ENCODE measurements at regions of chr5 and their contacts with region 1.

Region 1: GRCh38 chr5:57499262-57500050 is 16.8 kb upstream of the ACTBL2 start:
- DNase-seq: peak; percentile 42
- H3K4me3 ChIP-seq: no peak overlapping the region
- CTCF ChIP-seq: peak; percentile 77

Region 2: DNA sequence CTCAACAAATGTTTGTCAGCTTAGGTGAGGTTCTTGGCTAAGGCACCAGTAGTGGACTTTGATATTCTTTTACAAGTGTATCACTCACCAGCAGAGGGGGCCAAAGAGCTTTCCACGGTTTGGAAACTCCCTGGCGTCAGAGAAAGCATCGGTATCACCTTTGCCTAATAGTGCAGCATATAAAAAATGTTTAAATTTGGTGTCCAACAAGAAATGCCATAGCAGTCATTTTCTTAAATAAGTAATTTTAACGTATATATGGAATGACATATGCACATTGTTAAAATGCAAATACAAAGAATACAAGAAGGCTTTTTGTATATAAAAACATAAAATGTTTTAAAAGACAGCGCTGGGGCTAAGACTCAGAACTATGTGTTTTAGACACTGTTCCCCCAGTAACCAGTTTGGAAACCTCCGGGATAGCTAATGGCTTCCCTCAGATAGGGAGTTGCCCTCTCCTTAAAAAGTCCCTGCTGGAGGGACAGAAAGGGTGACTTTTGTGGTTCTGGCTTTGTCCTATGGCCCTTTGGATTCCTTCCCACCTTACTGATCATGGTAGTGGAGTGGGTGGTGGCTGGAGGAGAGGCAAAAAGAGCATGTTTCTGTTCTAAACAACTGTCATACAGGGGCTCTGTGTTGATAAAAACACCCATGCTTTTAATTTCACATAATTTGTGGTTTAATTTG is 201.0 kb before region 1 on chr5:
- in situ Hi-C with region 1: loop called (anchors 25 kb)
- DNase-seq: peak; percentile 87
- H3K4me3 ChIP-seq: no peak overlapping the region
- CTCF ChIP-seq: peak; percentile 81

Region 3: DNA sequence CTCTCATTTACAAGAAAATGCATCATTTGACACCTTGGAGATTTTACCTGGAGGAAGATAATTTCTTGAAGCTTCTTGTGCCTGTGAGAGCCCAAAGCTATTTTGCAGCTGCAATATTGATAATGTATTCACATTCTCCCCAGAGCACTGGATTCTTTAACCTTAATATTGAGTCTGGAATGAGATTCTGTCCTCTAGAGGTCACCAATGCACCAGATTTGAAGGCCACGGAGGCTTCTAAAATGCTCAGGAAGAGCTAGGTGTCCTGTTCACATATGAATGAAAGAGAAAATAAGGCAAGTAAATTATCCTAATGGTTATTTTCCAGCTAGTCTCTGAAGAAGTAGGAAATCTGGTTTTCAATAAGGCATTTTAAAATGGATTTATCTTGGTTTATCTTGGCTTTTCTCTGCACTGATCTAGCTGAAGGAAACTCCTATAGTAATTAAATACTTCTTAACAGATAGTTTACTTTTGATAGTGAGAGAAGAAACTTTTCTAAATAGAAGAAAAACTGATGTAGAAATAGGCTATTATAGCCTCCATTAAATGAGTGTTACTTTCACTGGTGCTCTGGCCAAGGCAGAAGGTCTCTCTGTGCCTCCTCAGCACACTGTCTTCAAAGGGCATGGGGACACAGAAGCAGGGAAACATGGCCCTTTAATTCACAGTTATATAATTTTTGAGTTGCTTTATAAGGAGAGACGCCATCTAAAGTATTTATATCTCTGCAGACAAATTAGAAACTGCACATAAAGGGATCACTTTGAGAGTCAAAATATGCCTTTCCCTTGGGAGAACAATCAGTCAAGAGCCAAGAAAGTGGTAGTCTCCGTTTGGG is 280.1 kb after region 1 on chr5:
- in situ Hi-C with region 1: loop called (anchors 5 kb)
- DNase-seq: peak; percentile 82
- H3K4me3 ChIP-seq: no peak overlapping the region
- CTCF ChIP-seq: peak; percentile 62

Measured in astrocyte of the cerebellum (primary cell).